Activated B cell treated with CpG ODN at 0.5 μM for 24 hours (primary cell): ENCODE measurements at regions of chr17 and their contacts with region 1.

Region 1: DNA sequence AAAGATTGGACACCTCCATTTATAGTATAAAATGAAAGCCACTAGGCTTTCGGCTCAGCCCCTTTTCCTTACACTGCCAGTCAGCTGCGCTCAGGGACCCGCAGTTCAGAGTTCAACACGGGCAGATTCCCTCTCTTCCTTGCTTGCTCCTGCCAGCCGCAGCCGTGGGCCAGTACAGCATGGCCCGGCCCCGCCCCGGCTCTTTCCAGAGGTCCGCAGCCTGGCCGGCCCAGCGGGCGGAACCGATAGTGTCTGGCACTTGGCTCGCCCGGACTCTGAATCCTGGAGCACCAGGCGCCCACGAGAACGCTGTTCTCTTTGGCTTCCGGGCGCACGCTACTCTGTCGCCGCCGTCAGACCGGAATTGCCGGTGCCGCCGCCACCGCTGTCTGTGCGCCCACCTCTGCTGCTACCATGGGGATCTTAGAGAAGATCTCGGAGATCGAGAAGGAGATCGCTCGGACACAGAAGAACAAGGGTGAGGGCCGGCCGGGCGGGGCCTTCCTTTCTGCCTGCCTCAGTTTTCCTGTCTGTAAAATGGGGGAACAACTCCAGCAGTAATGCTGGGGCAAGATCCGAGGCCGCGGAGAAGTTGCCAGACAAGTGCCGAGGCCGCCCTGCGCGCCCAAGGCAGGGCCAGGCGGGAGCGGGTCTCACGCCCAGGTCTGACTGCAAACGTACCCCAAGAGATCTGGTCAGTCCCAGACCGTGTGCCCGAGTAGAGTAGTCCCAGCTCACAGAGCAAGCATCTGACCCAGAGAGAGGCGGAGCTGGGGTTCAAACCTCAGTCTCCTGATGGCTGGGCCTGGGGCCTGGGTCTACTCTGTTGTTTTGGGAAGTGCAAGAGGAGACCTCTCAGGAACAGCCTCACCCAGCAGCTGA is at the start of gene DRG2:
- DNase-seq: peak; percentile 93
- ATAC-seq: peak; percentile 95
- H3K4me3 Mint-ChIP-seq: peak within 1 kb of the TSS; percentile 99
- H3K27ac Mint-ChIP-seq: peak within 1 kb of the TSS; percentile 95
- H3K4me1 Mint-ChIP-seq: peaks cover 26% of the 10 kb centered on the region
- H3K27me3 Mint-ChIP-seq: no peaks in the 10 kb centered on the region
- CTCF ChIP-seq: no peak
- total RNA-seq, gene DRG2: 55.7 and 67.1 TPM in 2 replicates

Region 2: GRCh38 chr17:17935321-17936271 is 152.3 kb before region 1 on chr17:
- CTCF ChIA-PET with region 1: no interaction called
- POLR2A ChIA-PET with region 1: interaction called, 10 read pairs
- intact Hi-C with region 1: no loop called
- DNase-seq: no peak
- ATAC-seq: no peak
- H3K4me3 Mint-ChIP-seq: no peak overlapping the region
- H3K27ac Mint-ChIP-seq: no peak overlapping the region
- H3K4me1 Mint-ChIP-seq: peaks cover 8% of the 10 kb centered on the region
- H3K27me3 Mint-ChIP-seq: no peaks in the 10 kb centered on the region
- CTCF ChIP-seq: no peak

Region 3: GRCh38 chr17:18102640-18103039 is 14.8 kb after region 1 on chr17:
- CTCF ChIA-PET with region 1: no interaction called
- POLR2A ChIA-PET with region 1: interaction called, 5 read pairs
- intact Hi-C with region 1: loop called (anchors 1 kb)
- DNase-seq: peak; percentile 35
- ATAC-seq: peak; percentile 93
- H3K4me3 Mint-ChIP-seq: no peak overlapping the region
- H3K27ac Mint-ChIP-seq: peak overlapping the region; percentile 61
- H3K4me1 Mint-ChIP-seq: peaks cover 22% of the 10 kb centered on the region
- H3K27me3 Mint-ChIP-seq: no peaks in the 10 kb centered on the region
- CTCF ChIP-seq: no peak